B cell (primary cell): ENCODE measurements at regions of chr10 and their contacts with region 1.

Region 1: DNA sequence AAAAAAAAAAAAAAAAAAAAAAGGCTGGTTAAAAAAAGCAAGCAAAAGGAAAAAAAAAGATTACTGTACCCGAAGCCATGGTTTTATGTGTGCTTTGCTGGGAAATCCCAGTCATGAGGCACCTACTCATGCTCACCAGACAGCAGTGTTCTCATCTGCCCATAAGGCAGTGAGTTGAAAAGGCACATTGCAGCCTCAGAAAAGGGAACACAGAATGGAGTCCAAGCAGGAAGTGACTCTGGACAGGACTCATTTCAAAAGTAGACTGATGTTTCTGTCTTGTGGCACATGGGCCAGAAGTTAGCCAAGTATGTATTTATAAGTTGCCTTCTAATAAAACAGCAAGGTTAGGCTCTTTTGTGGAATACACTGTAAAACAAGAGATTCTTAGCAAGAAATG is 40.2 kb downstream of the PDSS1 start:
- DNase-seq: peak; percentile 86
- ATAC-seq: peak; percentile 69
- H3K4me3 ChIP-seq: no peak overlapping the region
- H3K4me3 Mint-ChIP-seq: peak overlapping the region; percentile 52
- H3K27ac ChIP-seq: peak overlapping the region; percentile 87
- H3K27ac Mint-ChIP-seq: peak overlapping the region; percentile 89
- H3K4me1 ChIP-seq: peaks cover 36 to 49% of the 10 kb centered on the region in 2 donors
- H3K4me1 Mint-ChIP-seq: peaks cover 50% of the 10 kb centered on the region
- H3K27me3 ChIP-seq: no peaks in the 10 kb centered on the region
- H3K27me3 Mint-ChIP-seq: no peaks in the 10 kb centered on the region
- CTCF ChIP-seq: no peak

Region 2: GRCh38 chr10:26486991-26487850 is 250.5 kb before region 1 on chr10:
- CTCF ChIA-PET with region 1: no interaction called
- POLR2A ChIA-PET with region 1: no interaction called
- intact Hi-C with region 1: no loop called
- DNase-seq: peak; percentile 24
- ATAC-seq: peak; percentile 78
- H3K4me3 ChIP-seq: no peak overlapping the region
- H3K4me3 Mint-ChIP-seq: peak overlapping the region; percentile 74
- H3K27ac ChIP-seq: peak overlapping the region; percentile 36 to 67
- H3K27ac Mint-ChIP-seq: peak overlapping the region; percentile 89
- H3K4me1 ChIP-seq: peaks cover 40 to 43% of the 10 kb centered on the region in 2 donors
- H3K4me1 Mint-ChIP-seq: peaks cover 54% of the 10 kb centered on the region
- H3K27me3 ChIP-seq: no peaks in the 10 kb centered on the region
- H3K27me3 Mint-ChIP-seq: no peaks in the 10 kb centered on the region
- CTCF ChIP-seq: no peak

Region 3: GRCh38 chr10:26697163-26697921 is 40.4 kb before region 1 on chr10 and contains the start of gene PDSS1:
- CTCF ChIA-PET with region 1: no interaction called
- POLR2A ChIA-PET with region 1: interaction called, 5 read pairs
- intact Hi-C with region 1: loop called (anchors 2 kb)
- DNase-seq: peak; percentile 75
- ATAC-seq: peak; percentile 87
- H3K4me3 ChIP-seq: peak within 1 kb of the TSS; percentile 49 to 95 (median 94)
- H3K4me3 Mint-ChIP-seq: peak within 1 kb of the TSS; percentile 93
- H3K27ac ChIP-seq: peak within 1 kb of the TSS; percentile 64 to 73
- H3K27ac Mint-ChIP-seq: peak within 1 kb of the TSS; percentile 90
- H3K4me1 ChIP-seq: peaks cover 10 to 13% of the 10 kb centered on the region in 2 donors
- H3K4me1 Mint-ChIP-seq: peaks cover 18% of the 10 kb centered on the region
- H3K27me3 ChIP-seq: no peaks in the 10 kb centered on the region
- H3K27me3 Mint-ChIP-seq: no peaks in the 10 kb centered on the region
- CTCF ChIP-seq: no peak
- total RNA-seq, gene PDSS1: 3.6 and 4.3 TPM in 2 replicates

Region 4: GRCh38 chr10:26755443-26755903 is 17.7 kb after region 1 on chr10:
- CTCF ChIA-PET with region 1: interaction called, 3 read pairs
- POLR2A ChIA-PET with region 1: no interaction called
- intact Hi-C with region 1: loop called (anchors 2 kb)
- DNase-seq: peak; percentile 69
- ATAC-seq: peak; percentile 74
- H3K4me3 ChIP-seq: peak overlapping the region in 1 of 5 experiments; percentile 30
- H3K4me3 Mint-ChIP-seq: peak overlapping the region; percentile 51
- H3K27ac ChIP-seq: peak overlapping the region; percentile 1 to 28
- H3K27ac Mint-ChIP-seq: peak overlapping the region; percentile 84
- H3K4me1 ChIP-seq: peaks cover 7 to 12% of the 10 kb centered on the region in 2 donors
- H3K4me1 Mint-ChIP-seq: peaks cover 20% of the 10 kb centered on the region
- H3K27me3 ChIP-seq: no peaks in the 10 kb centered on the region
- H3K27me3 Mint-ChIP-seq: no peaks in the 10 kb centered on the region
- CTCF ChIP-seq: no peak

Region 5: DNA sequence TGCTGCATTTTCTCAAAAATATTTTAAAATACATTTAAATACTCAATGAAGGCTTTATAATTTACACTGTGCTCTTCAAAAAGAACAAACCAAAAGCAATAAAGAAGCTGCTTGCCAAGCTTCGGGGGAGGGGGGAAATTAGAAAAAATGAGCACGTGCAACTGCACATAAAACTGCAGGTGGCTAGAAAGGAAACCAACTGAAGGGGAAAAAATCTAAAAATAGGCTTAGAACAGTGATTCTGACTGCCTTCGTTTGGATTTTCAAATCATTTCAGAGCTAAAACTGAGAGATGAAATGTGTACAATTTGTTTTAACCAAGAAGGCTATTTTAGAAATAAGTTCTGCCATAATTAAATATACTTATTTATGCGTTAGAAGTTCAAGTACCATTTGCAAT is 61.6 kb after region 1 on chr10:
- CTCF ChIA-PET with region 1: no interaction called
- POLR2A ChIA-PET with region 1: no interaction called
- intact Hi-C with region 1: no loop called
- DNase-seq: peak; percentile 80
- ATAC-seq: peak; percentile 64
- H3K4me3 ChIP-seq: peak overlapping the region in 2 of 5 experiments; percentile 25 to 59
- H3K4me3 Mint-ChIP-seq: peak overlapping the region; percentile 69
- H3K27ac ChIP-seq: peak overlapping the region; percentile 67 to 81
- H3K27ac Mint-ChIP-seq: peak overlapping the region; percentile 72
- H3K4me1 ChIP-seq: peaks cover 70 to 83% of the 10 kb centered on the region in 2 donors
- H3K4me1 Mint-ChIP-seq: peaks cover 81% of the 10 kb centered on the region
- H3K27me3 ChIP-seq: no peaks in the 10 kb centered on the region
- H3K27me3 Mint-ChIP-seq: no peaks in the 10 kb centered on the region
- CTCF ChIP-seq: no peak